Prostate gland (tissue), 2 donors: ENCODE measurements at regions of chr5 and their contacts with region 1.

Region 1: DNA sequence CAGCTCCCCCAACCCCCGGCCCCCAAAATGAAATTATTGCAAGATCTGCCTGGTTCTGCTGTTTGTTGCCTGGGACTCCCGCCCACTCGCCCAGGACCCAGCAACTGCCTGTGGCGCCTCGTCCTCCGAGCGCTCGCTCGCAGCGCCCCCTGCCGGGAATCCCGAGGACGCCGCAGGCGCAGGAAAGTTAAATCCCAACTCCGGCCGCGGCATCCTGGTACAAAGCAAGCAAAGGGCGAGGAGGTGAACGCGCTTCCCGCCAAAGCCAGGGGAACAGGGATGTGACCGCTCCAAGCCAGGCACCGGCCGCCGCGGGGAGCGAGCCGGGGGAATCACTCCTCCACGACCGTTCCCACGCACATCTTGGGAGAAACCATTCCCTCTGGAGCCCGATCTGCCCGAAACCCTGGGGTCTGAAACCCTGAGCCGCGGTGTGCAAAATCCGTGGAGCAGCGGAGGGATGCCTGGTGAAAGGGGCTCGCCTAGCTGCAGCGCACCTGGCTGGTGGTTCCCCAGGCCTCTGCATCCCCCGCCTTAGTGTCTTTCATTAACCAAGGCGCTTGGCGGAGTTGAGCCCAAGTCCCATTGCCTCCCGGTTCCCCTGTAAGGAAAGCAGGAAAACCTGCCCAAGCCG is 1.3 kb downstream of the SEMA5A start:
- DNase-seq: peak; percentile 86
- H3K4me3 ChIP-seq: peak overlapping the region; percentile 67 to 74
- H3K27ac ChIP-seq: peak overlapping the region; percentile 48 to 64
- H3K4me1 ChIP-seq: no peaks in the 10 kb centered on the region
- H3K27me3 ChIP-seq: no peaks in the 10 kb centered on the region
- CTCF ChIP-seq: peak; percentile 78 to 95 (median 92)
- POLR2A ChIP-seq: peak; percentile 49

Region 2: DNA sequence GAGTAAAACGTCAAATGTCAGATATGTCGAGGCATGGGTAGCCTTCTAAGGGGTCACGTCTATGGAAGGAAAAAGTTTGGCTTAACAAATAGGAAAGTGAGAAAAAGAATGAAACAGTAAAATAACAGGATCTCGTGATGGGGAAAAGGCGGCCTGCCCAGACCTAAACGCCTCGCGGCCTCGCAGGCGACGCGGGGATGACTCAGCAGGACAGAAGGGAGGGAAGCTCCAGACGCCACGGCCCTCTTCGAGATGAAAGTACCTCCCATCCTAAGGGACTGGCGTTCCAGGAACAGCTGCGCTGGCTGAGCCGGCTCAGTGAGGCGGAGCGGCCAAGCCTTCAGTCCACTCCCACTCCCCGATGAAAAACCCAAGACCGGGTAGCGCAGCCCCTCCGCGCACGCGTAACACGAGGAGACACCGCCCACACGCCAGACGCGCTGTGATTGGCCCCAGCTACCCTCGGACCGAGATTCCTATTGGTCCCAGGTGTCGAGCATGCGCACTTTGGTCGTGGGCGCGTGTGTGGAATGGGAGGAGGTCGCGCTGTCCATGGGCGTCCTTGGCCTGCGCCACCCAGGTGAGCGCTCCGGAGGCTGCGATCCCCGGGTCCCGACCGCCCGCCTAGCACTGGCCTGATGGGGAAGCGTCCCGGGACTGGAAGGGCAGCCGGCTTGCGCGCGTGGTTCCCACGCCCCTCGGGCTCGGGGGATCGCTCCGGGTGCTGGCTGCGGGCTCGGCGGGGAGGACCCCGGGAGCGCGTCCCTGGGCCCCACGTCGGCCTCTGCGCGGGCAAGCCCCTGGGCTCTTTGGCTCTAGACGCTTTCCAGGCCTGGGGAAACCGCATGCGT is 1087.2 kb before region 1 on chr5:
- intact Hi-C with region 1: loop called (anchors 10 kb)
- DNase-seq: peak; percentile 94
- H3K4me3 ChIP-seq: peak overlapping the region; percentile 49 to 76
- H3K27ac ChIP-seq: peak overlapping the region; percentile 74 to 76
- H3K4me1 ChIP-seq: no peaks in the 10 kb centered on the region
- H3K27me3 ChIP-seq: no peaks in the 10 kb centered on the region
- CTCF ChIP-seq: no peak
- POLR2A ChIP-seq: peak; percentile 71

Region 3: DNA sequence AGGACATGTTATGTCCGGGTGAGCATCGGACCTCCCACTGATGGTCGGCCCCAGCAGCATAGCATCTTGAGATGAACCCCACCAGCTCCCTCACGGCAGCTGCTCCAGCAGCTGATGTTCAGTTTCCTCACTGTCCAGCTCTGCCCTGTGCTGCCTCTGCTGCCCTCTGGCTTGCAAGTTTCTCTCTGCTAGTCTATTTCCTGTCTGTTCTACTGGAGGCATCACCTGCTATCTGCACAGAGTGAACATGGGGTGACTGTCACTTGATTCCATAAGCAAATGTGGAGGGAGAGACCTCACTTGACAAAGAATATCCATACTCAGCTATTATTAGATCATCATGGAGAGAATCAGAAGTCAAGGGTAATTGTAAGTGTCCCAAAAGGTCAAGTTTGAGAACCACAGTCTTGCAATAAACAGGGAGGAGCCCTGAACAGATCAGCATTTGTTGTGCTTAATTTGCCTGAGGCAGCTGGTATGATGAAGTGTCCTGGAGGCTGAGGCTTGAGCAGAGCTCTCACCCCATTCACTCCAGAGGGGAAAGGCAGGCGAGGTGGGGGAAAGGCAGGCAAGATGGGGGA is 701.6 kb before region 1 on chr5:
- intact Hi-C with region 1: loop called (anchors 10 kb)
- DNase-seq: no peak
- H3K4me3 ChIP-seq: no peak overlapping the region
- H3K27ac ChIP-seq: no peak overlapping the region
- H3K4me1 ChIP-seq: no peaks in the 10 kb centered on the region
- H3K27me3 ChIP-seq: no peaks in the 10 kb centered on the region
- CTCF ChIP-seq: peak in 1 of 4 experiments; percentile 4
- POLR2A ChIP-seq: no peak

Region 4: GRCh38 chr5:9324348-9325077 is 220.1 kb before region 1 on chr5:
- intact Hi-C with region 1: no loop called
- DNase-seq: no peak
- H3K4me3 ChIP-seq: no peak overlapping the region
- H3K27ac ChIP-seq: no peak overlapping the region
- H3K4me1 ChIP-seq: no peaks in the 10 kb centered on the region
- H3K27me3 ChIP-seq: no peaks in the 10 kb centered on the region
- CTCF ChIP-seq: no peak
- POLR2A ChIP-seq: no peak

Region 5: GRCh38 chr5:9361835-9362234 is 182.8 kb before region 1 on chr5:
- intact Hi-C with region 1: loop called (anchors 10 kb)
- DNase-seq: peak; percentile 52
- H3K4me3 ChIP-seq: no peak overlapping the region
- H3K27ac ChIP-seq: no peak overlapping the region
- H3K4me1 ChIP-seq: no peaks in the 10 kb centered on the region
- H3K27me3 ChIP-seq: no peaks in the 10 kb centered on the region
- CTCF ChIP-seq: peak in 3 of 4 experiments; percentile 52 to 68 (median 61)
- POLR2A ChIP-seq: no peak

Region 6: DNA sequence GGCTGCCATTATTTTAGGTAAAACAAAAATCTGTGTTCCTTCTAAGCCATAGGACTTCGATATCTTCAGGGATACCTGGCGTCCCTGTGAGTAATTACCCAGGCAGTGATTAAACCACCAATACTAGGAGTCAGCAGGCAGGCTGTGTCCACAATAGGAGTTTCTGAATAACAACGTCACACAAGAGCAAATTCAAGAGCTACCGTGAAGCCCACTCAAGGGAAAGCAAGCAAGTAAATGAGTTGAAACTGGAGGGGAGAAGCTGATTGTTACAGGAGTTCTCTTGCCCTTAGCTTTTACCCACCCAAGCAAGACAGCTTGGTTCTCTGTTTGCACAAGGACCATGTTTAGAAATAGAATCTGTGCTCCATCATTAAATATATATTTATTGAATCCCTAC is 49.5 kb before region 1 on chr5:
- intact Hi-C with region 1: no loop called
- DNase-seq: no peak
- H3K4me3 ChIP-seq: no peak overlapping the region
- H3K27ac ChIP-seq: no peak overlapping the region
- H3K4me1 ChIP-seq: no peaks in the 10 kb centered on the region
- H3K27me3 ChIP-seq: no peaks in the 10 kb centered on the region
- CTCF ChIP-seq: no peak
- POLR2A ChIP-seq: no peak

Region 7: GRCh38 chr5:10133830-10134229 is 589.2 kb after region 1 on chr5:
- intact Hi-C with region 1: loop called (anchors 10 kb)
- DNase-seq: no peak
- H3K4me3 ChIP-seq: no peak overlapping the region
- H3K27ac ChIP-seq: no peak overlapping the region
- H3K4me1 ChIP-seq: no peaks in the 10 kb centered on the region
- H3K27me3 ChIP-seq: no peaks in the 10 kb centered on the region
- CTCF ChIP-seq: no peak
- POLR2A ChIP-seq: no peak

Region 8: GRCh38 chr5:10249948-10250803 is 705.6 kb after region 1 on chr5 and contains the start of gene CCT5:
- intact Hi-C with region 1: loop called (anchors 10 kb)
- DNase-seq: peak; percentile 94
- H3K4me3 ChIP-seq: peak within 1 kb of the TSS; percentile 78 to 89
- H3K27ac ChIP-seq: peak within 1 kb of the TSS; percentile 93 to 95
- H3K4me1 ChIP-seq: peaks cover 8% of the 10 kb centered on the region
- H3K27me3 ChIP-seq: no peaks in the 10 kb centered on the region
- CTCF ChIP-seq: no peak
- POLR2A ChIP-seq: peak; percentile 59
- total RNA-seq, gene CCT5: 113 to 140 TPM